Left lung (tissue), 14 donors: ENCODE measurements at regions of chr1 and their contacts with region 1.

Region 1: GRCh38 chr1:160607011-160607671 is 27.8 kb upstream of the CD84 start:
- DNase-seq: peak in 2 of 4 donors; percentile 39 to 68
- ATAC-seq: peak; percentile 99
- H3K4me3 ChIP-seq: no peak overlapping the region
- H3K27ac ChIP-seq: no peak overlapping the region
- H3K4me1 ChIP-seq: peaks cover 0 to 12% of the 10 kb centered on the region in 2 donors
- H3K27me3 ChIP-seq: peaks cover 0 to 2% of the 10 kb centered on the region in 2 donors
- CTCF ChIP-seq: peak; percentile 61 to 74

Region 2: DNA sequence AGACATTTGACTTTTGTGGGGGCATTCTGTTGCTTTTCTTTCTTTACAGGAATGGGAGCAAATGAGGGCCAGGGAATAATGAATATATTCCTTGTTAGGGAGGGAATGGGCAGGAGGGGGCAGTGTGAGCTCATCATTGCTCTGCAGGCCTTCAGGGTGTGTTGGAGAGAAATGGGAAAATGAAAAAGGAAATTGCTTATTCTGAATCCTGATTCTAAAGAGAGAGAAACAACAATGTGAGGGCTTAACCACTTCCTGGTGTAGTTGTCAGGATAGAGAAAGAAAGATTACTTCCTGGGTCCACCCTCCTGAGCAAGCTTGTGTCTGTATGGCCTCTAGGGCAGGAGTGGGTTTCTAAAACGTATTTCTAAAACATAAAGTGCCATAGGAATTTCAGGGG is 178.5 kb before region 1 on chr1:
- intact Hi-C with region 1: loop called in 1 of 2 experiments (anchors 5 kb)
- DNase-seq: peak in 2 of 4 donors; percentile 31 to 54
- ATAC-seq: peak; percentile 91
- H3K4me3 ChIP-seq: no peak overlapping the region
- H3K27ac ChIP-seq: peak overlapping the region in 1 of 2 donors; percentile 42
- H3K4me1 ChIP-seq: peaks cover 5 to 21% of the 10 kb centered on the region in 2 donors
- H3K27me3 ChIP-seq: no peaks in the 10 kb centered on the region
- CTCF ChIP-seq: peak; percentile 50 to 65

Region 3: GRCh38 chr1:160739098-160739511 is 132.0 kb after region 1 on chr1 and contains the start of gene SLAMF7:
- intact Hi-C with region 1: no loop called
- DNase-seq: peak in 1 of 4 donors; percentile 42
- ATAC-seq: peak; percentile 84
- H3K4me3 ChIP-seq: peak within 1 kb of the TSS in 1 of 2 donors; percentile 43
- H3K27ac ChIP-seq: peak within 1 kb of the TSS in 1 of 2 donors; percentile 57
- H3K4me1 ChIP-seq: peaks cover 0 to 51% of the 10 kb centered on the region in 2 donors
- H3K27me3 ChIP-seq: no peaks in the 10 kb centered on the region
- CTCF ChIP-seq: no peak
- polyA plus RNA-seq, gene SLAMF7: 0.77 to 1.7 (median 1.00) TPM

Region 4: DNA sequence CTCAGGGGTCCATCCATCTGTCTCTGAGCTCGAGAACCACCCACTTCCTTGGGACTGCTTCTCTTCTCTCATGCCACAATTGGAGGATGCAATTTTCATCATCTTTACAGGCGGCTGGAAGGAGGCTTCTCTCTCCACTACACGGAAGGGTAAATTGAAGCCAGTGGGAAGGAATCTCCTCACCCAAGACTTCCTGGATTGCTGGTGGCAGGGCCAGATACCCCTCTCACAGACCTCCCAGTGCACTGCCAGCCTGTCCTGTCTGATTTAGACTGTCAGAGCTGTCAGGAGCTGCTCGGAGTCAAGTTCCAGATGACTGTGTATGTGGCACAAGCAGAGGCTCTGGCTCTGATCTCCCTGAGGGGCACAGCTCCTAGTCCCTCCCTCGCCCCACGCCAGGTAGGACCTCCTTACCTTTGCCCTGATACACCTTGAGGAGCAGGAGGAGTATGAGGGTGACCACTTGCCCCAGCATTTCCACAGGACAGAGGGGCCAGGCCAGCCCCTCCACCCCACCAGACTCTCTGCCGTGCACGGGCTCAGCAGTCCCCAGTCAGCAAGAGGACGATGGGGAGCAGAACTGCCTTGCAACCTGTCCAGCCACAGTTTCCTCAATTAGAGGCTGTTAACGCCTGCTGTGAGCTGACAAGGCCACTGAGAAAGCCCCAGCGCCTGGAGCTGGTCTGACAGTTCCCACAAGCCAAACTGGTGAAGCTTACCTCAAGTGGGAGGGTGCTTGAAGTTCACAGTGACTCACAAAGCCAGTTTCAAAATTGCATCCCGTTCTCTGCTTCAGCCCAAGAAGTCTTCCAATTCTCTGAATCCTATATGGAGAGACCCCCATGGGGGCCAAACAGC is 255.3 kb after region 1 on chr1 and contains the start of gene CD244:
- intact Hi-C with region 1: no loop called
- DNase-seq: peak in 3 of 4 donors; percentile 19 to 84 (median 57)
- ATAC-seq: peak; percentile 84
- H3K4me3 ChIP-seq: peak within 1 kb of the TSS in 1 of 2 donors; percentile 13
- H3K27ac ChIP-seq: peak within 1 kb of the TSS in 1 of 2 donors; percentile 77
- H3K4me1 ChIP-seq: peaks cover 0 to 52% of the 10 kb centered on the region in 2 donors
- H3K27me3 ChIP-seq: peaks cover 0 to 13% of the 10 kb centered on the region in 2 donors
- CTCF ChIP-seq: no peak
- polyA plus RNA-seq, gene CD244: 0.43 to 1.0 (median 0.71) TPM